ENCODE measurements at regions of chr1 and their contacts with region 1.

Region 1: DNA sequence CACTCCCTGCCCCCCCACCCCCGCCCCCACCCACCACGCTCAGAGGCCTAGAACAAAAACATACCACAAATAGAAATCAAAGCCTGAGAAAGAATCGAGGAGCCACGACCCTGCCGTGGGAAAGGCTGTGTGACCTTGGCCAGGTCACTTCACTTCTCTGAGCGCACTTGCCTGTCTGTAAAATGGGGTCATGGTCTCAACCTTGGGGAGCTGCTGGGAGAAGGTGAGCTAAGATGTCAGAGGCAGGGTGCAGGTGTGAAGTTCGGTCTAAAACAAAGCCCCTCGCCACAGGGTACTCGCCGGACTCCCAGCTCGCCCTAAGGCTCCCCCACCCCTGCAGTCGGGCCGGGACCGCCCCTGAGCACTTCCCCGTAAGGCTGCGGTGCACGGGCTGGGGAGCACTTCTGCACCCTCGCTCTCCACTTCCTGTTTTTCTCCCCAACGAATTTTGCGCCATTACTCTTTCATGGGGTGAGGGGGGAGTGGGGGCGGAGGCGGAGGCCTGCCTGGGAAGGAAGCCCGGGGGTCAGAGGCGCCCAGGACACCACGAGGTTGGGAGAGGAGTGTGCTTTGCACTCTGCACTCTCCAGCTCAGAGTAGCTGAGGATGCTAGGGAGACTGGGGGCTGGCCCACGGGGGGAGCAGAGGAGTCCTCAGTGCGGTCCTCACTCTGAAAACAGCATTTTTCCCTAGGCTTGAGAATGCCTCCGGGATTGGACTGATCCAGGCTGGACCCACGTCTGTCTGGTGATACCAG is 21.9 kb upstream of the PIK3CD start:
- DNase-seq: no peak
- H3K4me3 ChIP-seq: no peak overlapping the region
- H3K27ac ChIP-seq: no peak overlapping the region
- H3K4me1 ChIP-seq: no peaks in the 10 kb centered on the region
- H3K27me3 ChIP-seq: no peaks in the 10 kb centered on the region

Region 2: GRCh38 chr1:9867408-9868243 is 238.0 kb after region 1 on chr1:
- in situ Hi-C with region 1: loop called (anchors 10 kb)
- DNase-seq: peak; percentile 71
- H3K4me3 ChIP-seq: no peak overlapping the region
- H3K27ac ChIP-seq: no peak overlapping the region
- H3K4me1 ChIP-seq: no peaks in the 10 kb centered on the region
- H3K27me3 ChIP-seq: no peaks in the 10 kb centered on the region

Measured in GM23248 (cell line).